ENCODE measurements at regions of chr6 and their contacts with region 1.

Region 1: DNA sequence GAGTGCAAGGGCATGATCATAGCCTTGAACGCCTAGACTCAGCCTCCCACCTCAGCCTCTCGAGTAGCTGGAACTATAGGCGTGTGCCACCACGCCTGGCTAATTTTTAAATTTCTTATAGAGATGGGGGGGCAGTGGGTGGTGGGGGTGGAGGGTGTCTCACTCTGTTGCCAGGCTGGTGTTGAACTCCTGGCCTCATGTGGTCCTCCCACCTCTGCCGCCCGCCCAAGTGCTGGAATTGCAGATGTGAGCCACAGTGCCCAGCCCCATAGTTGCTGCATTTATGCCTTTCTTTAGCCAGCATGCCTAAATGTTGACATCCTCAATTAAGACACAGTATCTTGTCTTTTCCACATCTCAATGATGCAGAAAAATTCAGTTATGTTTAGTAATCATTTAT is 171.1 kb downstream of the ARID1B start:
- DNase-seq: no peak
- ATAC-seq: no peak
- H3K4me3 ChIP-seq: no peak overlapping the region
- H3K27ac ChIP-seq: no peak overlapping the region
- H3K4me1 ChIP-seq: peaks cover 37% of the 10 kb centered on the region
- H3K27me3 ChIP-seq: no peaks in the 10 kb centered on the region
- CTCF ChIP-seq: no peak

Region 2: GRCh38 chr6:158092806-158093205 is 1144.5 kb after region 1 on chr6:
- CTCF ChIA-PET with region 1: interaction called, 13 read pairs
- POLR2A ChIA-PET with region 1: no interaction called
- in situ Hi-C with region 1: no loop called
- intact Hi-C with region 1: no loop called
- DNase-seq: no peak
- ATAC-seq: no peak
- H3K4me3 ChIP-seq: no peak overlapping the region
- H3K27ac ChIP-seq: no peak overlapping the region
- H3K4me1 ChIP-seq: no peaks in the 10 kb centered on the region
- H3K27me3 ChIP-seq: no peaks in the 10 kb centered on the region
- CTCF ChIP-seq: no peak